ENCODE measurements at regions of chr3 and their contacts with region 1.

Region 1: DNA sequence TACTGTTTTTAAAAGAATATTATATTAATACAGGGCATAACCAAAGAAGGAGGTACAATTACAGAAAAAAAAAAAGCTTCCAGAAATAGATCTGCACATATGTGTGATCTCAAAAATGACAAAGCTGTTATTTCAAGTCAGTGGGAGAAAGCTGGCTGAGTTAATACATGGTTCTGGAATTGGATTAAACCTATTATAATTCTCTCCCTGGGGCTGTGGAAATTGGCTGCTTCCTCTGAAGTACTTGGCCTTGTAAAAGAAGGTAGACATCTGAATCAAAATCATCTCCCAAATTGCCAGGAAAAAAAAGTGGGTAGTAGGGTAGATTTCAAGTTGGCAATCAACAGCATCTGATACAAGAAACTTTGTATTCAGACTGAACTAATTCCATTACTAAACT is 723.9 kb upstream of the ALCAM start:
- DNase-seq: no peak
- H3K4me3 Mint-ChIP-seq: no peak overlapping the region
- H3K27ac Mint-ChIP-seq: no peak overlapping the region
- H3K4me1 Mint-ChIP-seq: no peaks in the 10 kb centered on the region
- H3K27me3 Mint-ChIP-seq: no peaks in the 10 kb centered on the region
- CTCF ChIP-seq: no peak

Region 2: GRCh38 chr3:104717828-104718196 is 75.0 kb after region 1 on chr3:
- CTCF ChIA-PET with region 1: no interaction called
- intact Hi-C with region 1: loop called (anchors 2 kb)
- DNase-seq: no peak
- H3K4me3 Mint-ChIP-seq: no peak overlapping the region
- H3K27ac Mint-ChIP-seq: no peak overlapping the region
- H3K4me1 Mint-ChIP-seq: no peaks in the 10 kb centered on the region
- H3K27me3 Mint-ChIP-seq: no peaks in the 10 kb centered on the region
- CTCF ChIP-seq: no peak